ENCODE measurements at regions of chr3 and their contacts with region 1.

Region 1: GRCh38 chr3:116863822-116864589 is 154.4 kb downstream of the TUSC7 start:
- DNase-seq: no peak
- ATAC-seq: no peak
- H3K4me3 ChIP-seq: no peak overlapping the region
- H3K4me3 Mint-ChIP-seq: no peak overlapping the region
- H3K27ac ChIP-seq: no peak overlapping the region
- H3K27ac Mint-ChIP-seq: no peak overlapping the region
- H3K4me1 ChIP-seq: no peaks in the 10 kb centered on the region
- H3K4me1 Mint-ChIP-seq: no peaks in the 10 kb centered on the region
- H3K27me3 ChIP-seq: no peaks in the 10 kb centered on the region
- H3K27me3 Mint-ChIP-seq: no peaks in the 10 kb centered on the region
- CTCF ChIP-seq: no peak

Region 2: GRCh38 chr3:116849261-116849688 is 14.7 kb before region 1 on chr3:
- CTCF ChIA-PET with region 1: no interaction called
- POLR2A ChIA-PET with region 1: no interaction called
- intact Hi-C with region 1: loop called in 1 of 2 experiments (anchors 1 kb)
- DNase-seq: no peak
- ATAC-seq: no peak
- H3K4me3 ChIP-seq: no peak overlapping the region
- H3K4me3 Mint-ChIP-seq: no peak overlapping the region
- H3K27ac ChIP-seq: no peak overlapping the region
- H3K27ac Mint-ChIP-seq: no peak overlapping the region
- H3K4me1 ChIP-seq: no peaks in the 10 kb centered on the region
- H3K4me1 Mint-ChIP-seq: no peaks in the 10 kb centered on the region
- H3K27me3 ChIP-seq: no peaks in the 10 kb centered on the region
- H3K27me3 Mint-ChIP-seq: no peaks in the 10 kb centered on the region
- CTCF ChIP-seq: no peak

Region 3: GRCh38 chr3:116980099-116980498 is 116.1 kb after region 1 on chr3:
- CTCF ChIA-PET with region 1: no interaction called
- POLR2A ChIA-PET with region 1: no interaction called
- intact Hi-C with region 1: no loop called
- DNase-seq: no peak
- ATAC-seq: no peak
- H3K4me3 ChIP-seq: no peak overlapping the region
- H3K4me3 Mint-ChIP-seq: no peak overlapping the region
- H3K27ac ChIP-seq: no peak overlapping the region
- H3K27ac Mint-ChIP-seq: no peak overlapping the region
- H3K4me1 ChIP-seq: no peaks in the 10 kb centered on the region
- H3K4me1 Mint-ChIP-seq: no peaks in the 10 kb centered on the region
- H3K27me3 ChIP-seq: no peaks in the 10 kb centered on the region
- H3K27me3 Mint-ChIP-seq: no peaks in the 10 kb centered on the region
- CTCF ChIP-seq: no peak

Measured in CD8-positive, alpha-beta T cell (primary cell).